Transverse colon (tissue), 4 donors: ENCODE measurements at regions of chr1 and their contacts with region 1.

Region 1: GRCh38 chr1:91830242-91831131 is 55.5 kb downstream of the TGFBR3 start:
- DNase-seq: peak; percentile 67
- H3K4me3 ChIP-seq: no peak overlapping the region
- H3K27ac ChIP-seq: peak overlapping the region; percentile 75 to 79 (median 78)
- H3K4me1 ChIP-seq: peaks cover 21 to 64% (median 43%) of the 10 kb centered on the region in 4 donors
- H3K27me3 ChIP-seq: no peaks in the 10 kb centered on the region
- CTCF ChIP-seq: peak in 2 of 5 experiments; percentile 23
- EP300 ChIP-seq: no peak
- POLR2A ChIP-seq: no peak

Region 2: DNA sequence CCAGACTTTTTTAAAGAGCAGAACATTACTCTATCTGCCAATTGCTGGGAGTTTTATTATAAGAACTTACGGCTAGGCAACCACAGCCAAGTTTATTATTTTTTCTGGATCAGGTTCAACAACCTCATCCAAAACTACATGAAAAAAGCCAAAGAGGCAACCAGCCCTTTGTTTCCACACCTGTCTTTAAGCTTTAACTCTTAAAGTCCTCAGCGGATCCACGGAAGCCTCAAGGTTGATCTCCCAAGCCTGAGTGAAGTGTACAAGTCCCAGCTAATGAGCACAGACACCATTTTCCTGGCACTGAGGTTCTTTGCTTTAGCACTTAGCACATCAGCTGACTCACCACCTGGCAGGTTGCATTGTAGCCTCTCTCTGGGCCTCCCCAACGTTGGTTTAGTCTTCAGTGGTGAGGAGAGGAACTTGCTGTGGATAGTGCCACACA is 87.6 kb before region 1 on chr1:
- in situ Hi-C with region 1: no loop called
- intact Hi-C with region 1: loop called (anchors 10 kb)
- DNase-seq: peak; percentile 20
- H3K4me3 ChIP-seq: no peak overlapping the region
- H3K27ac ChIP-seq: peak overlapping the region; percentile 20 to 69 (median 56)
- H3K4me1 ChIP-seq: peaks cover 6 to 19% (median 13%) of the 10 kb centered on the region in 4 donors
- H3K27me3 ChIP-seq: no peaks in the 10 kb centered on the region
- CTCF ChIP-seq: no peak
- EP300 ChIP-seq: no peak
- POLR2A ChIP-seq: no peak